Testis (tissue), 5 donors: ENCODE measurements at regions of chr6 and their contacts with region 1.

Region 1: GRCh38 chr6:30828027-30828960 is 56.0 kb upstream of the DDR1 start:
- DNase-seq: peak; percentile 92
- H3K4me3 ChIP-seq: no peak overlapping the region
- H3K27ac ChIP-seq: peak overlapping the region in 1 of 2 donors; percentile 7
- H3K4me1 ChIP-seq: peaks cover 12% of the 10 kb centered on the region
- H3K27me3 ChIP-seq: no peaks in the 10 kb centered on the region
- CTCF ChIP-seq: peak; percentile 92 to 96 (median 93)
- POLR2A ChIP-seq: no peak

Region 2: DNA sequence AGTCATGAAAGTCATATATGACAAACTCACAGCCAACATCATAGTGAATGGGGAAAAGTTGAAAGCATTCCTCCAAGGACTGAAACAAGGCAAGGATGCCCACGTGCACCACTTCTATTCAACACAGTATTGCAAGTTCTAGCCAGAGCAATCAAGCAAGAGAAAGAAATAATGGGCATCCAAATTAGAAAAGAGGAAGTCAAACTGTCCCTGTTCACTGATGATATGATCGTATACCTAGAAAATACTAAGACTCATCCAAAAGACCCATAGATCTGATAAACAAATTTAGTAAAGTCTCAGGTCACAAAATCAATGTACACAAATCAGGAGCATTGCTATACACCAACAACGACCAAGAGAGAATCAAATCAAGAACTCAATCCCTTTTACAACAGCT is 442.1 kb before region 1 on chr6:
- intact Hi-C with region 1: no loop called
- DNase-seq: no peak
- H3K4me3 ChIP-seq: no peak overlapping the region
- H3K27ac ChIP-seq: no peak overlapping the region
- H3K4me1 ChIP-seq: no peaks in the 10 kb centered on the region
- H3K27me3 ChIP-seq: no peaks in the 10 kb centered on the region
- CTCF ChIP-seq: no peak
- POLR2A ChIP-seq: no peak

Region 3: DNA sequence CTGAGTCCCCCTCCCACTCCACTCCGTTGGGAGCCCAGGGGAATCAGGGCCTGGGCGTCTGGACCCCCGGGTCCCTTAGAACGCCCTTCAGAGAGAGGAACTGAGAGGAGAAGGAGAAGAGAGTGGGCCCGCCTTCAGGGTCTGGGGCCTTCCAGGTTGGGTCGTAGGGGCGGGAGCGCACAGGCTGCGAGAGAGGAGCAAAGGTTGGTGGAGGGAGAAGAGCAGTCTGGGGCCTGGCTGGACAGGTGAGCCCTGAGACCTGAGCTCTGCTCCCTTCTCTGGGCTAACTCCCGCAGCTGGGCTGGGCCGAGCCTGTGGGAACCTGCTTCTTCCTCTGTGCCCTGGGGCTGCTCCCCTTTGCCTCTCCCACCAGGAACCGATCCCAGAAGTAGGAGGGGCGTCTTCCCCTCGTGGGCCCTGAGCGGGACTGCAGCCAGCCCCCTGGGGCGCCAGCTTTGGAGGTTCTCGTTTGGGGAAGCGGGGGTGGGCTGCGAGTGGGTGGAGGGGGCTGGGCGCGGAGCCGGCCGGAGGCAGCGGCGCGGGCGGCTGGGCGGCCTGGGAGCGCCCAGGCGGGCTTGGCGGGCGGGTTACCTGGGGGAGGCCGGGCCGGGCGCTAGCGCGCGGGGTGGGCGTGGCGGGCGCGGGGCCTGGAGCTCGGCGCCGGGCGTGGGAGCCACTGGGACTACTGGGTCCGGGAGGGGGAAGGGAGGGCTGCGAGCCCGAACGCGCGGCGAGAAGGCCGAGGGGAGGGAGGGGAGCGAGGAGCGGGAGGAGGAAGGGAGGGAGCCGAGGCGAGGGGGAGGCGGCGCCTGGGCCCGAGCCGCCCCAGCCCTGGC is 55.6 kb after region 1 on chr6 and contains the start of gene DDR1:
- intact Hi-C with region 1: loop called (anchors 5 kb)
- DNase-seq: peak; percentile 81
- H3K4me3 ChIP-seq: peak within 1 kb of the TSS; percentile 73 to 78
- H3K27ac ChIP-seq: peak within 1 kb of the TSS; percentile 73 to 93
- H3K4me1 ChIP-seq: peaks cover 45% of the 10 kb centered on the region
- H3K27me3 ChIP-seq: no peaks in the 10 kb centered on the region
- CTCF ChIP-seq: no peak
- POLR2A ChIP-seq: no peak
- total RNA-seq, gene DDR1: 94.6 to 97.6 TPM

Region 4: DNA sequence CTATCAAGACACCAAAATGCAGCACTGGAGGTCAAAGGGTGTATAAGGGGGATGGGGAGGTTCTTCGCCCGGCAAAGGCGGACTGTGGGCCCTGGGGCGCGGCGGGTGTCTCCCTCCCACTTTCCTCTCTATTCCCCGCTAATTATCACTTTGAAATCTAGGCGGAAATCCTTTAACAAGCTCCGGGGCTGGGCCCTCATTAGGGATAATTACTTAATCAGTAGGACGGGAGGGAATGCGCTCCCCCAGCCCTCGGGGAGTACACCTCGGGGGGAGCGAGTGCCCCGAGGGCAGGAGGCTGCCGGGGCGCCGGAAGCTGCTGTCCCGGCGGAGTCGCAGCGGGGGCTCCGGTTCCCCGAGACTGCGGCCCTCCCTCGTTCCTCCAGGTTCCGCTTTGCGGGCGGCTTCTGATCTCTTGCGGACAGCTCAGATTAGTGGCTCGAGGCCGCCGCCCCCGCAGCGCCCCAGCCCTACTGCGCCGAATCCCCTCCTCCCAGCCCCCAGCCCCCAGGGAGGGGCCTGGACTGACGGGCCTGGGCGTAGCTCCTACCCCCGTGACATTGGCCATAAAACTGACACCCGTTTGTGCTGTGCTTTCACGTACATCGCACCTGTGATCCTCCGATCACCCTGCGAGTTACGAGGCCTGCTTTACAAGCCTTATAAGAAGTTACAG is 127.2 kb after region 1 on chr6:
- intact Hi-C with region 1: no loop called
- DNase-seq: peak; percentile 61
- H3K4me3 ChIP-seq: peak overlapping the region; percentile 55 to 59
- H3K27ac ChIP-seq: peak overlapping the region; percentile 15 to 57
- H3K4me1 ChIP-seq: peaks cover 7% of the 10 kb centered on the region
- H3K27me3 ChIP-seq: no peaks in the 10 kb centered on the region
- CTCF ChIP-seq: no peak
- POLR2A ChIP-seq: no peak